ENCODE measurements at regions of chr1 and their contacts with region 1.

Region 1: GRCh38 chr1:65493802-65494201 is 73.3 kb downstream of the LEPR start:
- DNase-seq: no peak
- ATAC-seq: no peak
- H3K4me3 ChIP-seq: no peak overlapping the region
- H3K4me3 Mint-ChIP-seq: no peak overlapping the region
- H3K27ac ChIP-seq: no peak overlapping the region
- H3K27ac Mint-ChIP-seq: no peak overlapping the region
- H3K4me1 ChIP-seq: no peaks in the 10 kb centered on the region
- H3K4me1 Mint-ChIP-seq: no peaks in the 10 kb centered on the region
- H3K27me3 ChIP-seq: no peaks in the 10 kb centered on the region
- H3K27me3 Mint-ChIP-seq: no peaks in the 10 kb centered on the region

Region 2: DNA sequence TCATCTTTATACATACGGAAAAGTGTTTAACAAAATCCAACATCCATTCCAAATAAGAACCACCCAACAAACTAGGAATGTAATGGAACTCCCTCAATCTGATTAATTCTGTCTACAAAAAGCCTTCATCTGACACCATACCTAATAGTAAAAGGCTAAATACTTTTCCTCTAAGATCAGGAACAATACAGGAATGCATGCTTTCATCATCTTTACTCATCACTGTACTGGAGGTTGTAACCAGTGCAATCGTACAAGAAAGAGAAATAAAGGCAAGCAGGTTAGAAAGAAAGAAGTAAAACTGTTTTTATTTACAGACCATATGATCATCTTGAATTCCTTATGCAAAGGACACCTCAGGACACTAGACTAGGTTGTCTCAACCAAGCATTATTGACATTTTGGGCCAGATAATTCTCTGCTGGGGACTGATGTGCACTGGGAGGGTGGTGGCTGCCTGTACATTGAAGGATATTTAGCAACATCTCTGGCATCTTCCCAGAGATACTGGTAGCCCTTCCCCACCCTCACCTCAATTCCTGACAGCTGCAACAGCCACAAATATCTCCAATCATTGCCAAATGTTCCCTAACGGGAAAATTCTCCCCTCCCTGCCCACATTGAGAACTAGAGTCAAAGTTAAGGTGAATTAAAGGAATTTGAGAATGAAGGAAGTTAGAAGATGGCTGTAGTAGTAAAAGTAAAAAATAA is 1337.9 kb after region 1 on chr1:
- CTCF ChIA-PET with region 1: no interaction called
- POLR2A ChIA-PET with region 1: no interaction called
- DNase-seq: no peak
- ATAC-seq: no peak
- H3K4me3 ChIP-seq: no peak overlapping the region
- H3K4me3 Mint-ChIP-seq: no peak overlapping the region
- H3K27ac ChIP-seq: no peak overlapping the region
- H3K27ac Mint-ChIP-seq: no peak overlapping the region
- H3K4me1 ChIP-seq: no peaks in the 10 kb centered on the region
- H3K4me1 Mint-ChIP-seq: peaks cover 0 to 6% (median 0%) of the 10 kb centered on the region in 3 donors
- H3K27me3 ChIP-seq: no peaks in the 10 kb centered on the region
- H3K27me3 Mint-ChIP-seq: no peaks in the 10 kb centered on the region

Region 3: DNA sequence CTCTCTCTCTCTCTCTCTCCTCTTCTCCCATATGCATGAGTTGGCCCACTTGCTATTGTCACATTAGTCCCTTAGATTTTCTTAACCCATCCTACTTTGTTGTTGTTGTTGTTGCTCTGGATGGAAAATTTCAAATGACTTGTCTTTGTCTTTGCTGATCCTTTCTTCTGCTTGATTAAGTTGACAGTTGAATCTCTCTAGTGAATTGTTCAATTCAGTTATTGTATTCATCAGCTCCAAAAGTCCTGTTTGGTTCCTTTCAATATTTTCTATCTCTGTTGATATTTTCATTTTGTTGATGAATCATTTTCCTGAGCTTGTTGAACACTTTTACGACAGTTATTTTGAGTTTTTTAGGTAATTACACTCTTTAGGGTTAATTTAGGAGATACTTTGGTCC is 1578.9 kb after region 1 on chr1:
- CTCF ChIA-PET with region 1: no interaction called
- POLR2A ChIA-PET with region 1: interaction called in 1 of 2 experiments, 12 read pairs
- DNase-seq: no peak
- ATAC-seq: no peak
- H3K4me3 ChIP-seq: no peak overlapping the region
- H3K4me3 Mint-ChIP-seq: no peak overlapping the region
- H3K27ac ChIP-seq: no peak overlapping the region
- H3K27ac Mint-ChIP-seq: no peak overlapping the region
- H3K4me1 ChIP-seq: no peaks in the 10 kb centered on the region
- H3K4me1 Mint-ChIP-seq: no peaks in the 10 kb centered on the region
- H3K27me3 ChIP-seq: peaks cover 0 to 2% of the 10 kb centered on the region in 2 experiments
- H3K27me3 Mint-ChIP-seq: peaks cover 3% of the 10 kb centered on the region in 2 donors

Measured in T-cell (primary cell).